ENCODE measurements at regions of chr14 and their contacts with region 1.

Region 1: GRCh38 chr14:34227834-34228649 is 234.0 kb downstream of the SPTSSA start:
- DNase-seq: peak; percentile 54 to 73 (median 63)
- ATAC-seq: peak; percentile 99
- H3K4me3 ChIP-seq: no peak overlapping the region
- H3K27ac ChIP-seq: no peak overlapping the region
- H3K4me1 ChIP-seq: no peaks in the 10 kb centered on the region; a peak in 1 of 5 replicates
- H3K27me3 ChIP-seq: no peaks in the 10 kb centered on the region; a peak in 1 of 5 replicates
- CTCF ChIP-seq: peak; percentile 70 to 76 (median 72)
- EP300 ChIP-seq: no peak
- POLR2A ChIP-seq: no peak
- RAD21 ChIP-seq: peak; percentile 77 to 84

Region 2: DNA sequence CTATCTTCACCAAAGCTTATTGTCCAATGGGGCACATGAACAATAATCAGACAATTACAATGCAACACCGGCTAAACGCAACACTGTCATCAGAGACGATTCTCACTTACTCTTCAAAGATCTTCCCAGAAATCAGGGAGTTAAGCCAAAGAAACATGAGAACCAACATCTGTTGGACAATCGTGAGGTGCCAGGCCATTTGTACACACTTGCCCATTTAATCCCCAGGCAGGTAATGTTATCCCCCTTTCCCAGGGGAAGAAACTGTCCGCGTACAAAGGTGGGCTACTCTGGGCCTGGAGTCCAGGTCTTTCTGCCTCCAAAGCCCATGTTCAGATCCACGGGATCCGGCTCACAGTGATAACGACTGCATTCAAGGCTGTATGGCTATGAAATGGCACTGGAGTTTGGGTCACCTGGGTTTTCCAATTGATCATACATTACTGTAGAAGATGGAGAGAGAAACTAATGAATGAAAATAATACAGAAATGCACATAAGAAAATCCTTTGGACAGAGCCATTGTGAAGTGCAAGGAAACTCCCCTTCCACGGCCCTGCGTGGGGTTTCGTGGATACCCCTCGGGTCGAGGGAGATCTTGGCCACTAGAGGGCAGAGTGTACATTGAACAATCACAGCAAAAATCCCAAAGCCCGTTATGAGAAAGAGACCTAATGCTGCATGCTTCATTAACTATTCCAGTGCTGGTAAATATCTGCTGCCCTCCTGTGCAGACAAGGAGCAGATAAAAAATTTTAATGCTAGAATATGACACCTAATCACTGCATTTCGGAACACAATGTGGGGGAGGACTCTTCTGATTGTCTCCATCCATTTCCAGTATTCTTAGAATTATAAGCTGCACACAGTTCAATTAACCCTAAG is 388.6 kb before region 1 on chr14:
- CTCF ChIA-PET with region 1: no interaction called
- POLR2A ChIA-PET with region 1: no interaction called
- in situ Hi-C with region 1: loop called (anchors 10 kb)
- intact Hi-C with region 1: loop called (anchors 5 kb)
- DNase-seq: peak; percentile 43 to 67 (median 52)
- ATAC-seq: peak; percentile 79
- H3K4me3 ChIP-seq: no peak overlapping the region
- H3K27ac ChIP-seq: no peak overlapping the region
- H3K4me1 ChIP-seq: peaks cover 5 to 25% of the 10 kb centered on the region in 2 experiments; a peak in 4 of 5 replicates
- H3K27me3 ChIP-seq: no peaks in the 10 kb centered on the region
- CTCF ChIP-seq: peak; percentile 63 to 80 (median 66)
- EP300 ChIP-seq: no peak
- POLR2A ChIP-seq: no peak
- RAD21 ChIP-seq: peak; percentile 66 to 77

Region 3: GRCh38 chr14:33959692-33960151 is 268.3 kb before region 1 on chr14:
- CTCF ChIA-PET with region 1: no interaction called
- POLR2A ChIA-PET with region 1: no interaction called
- in situ Hi-C with region 1: loop called (anchors 10 kb)
- intact Hi-C with region 1: no loop called
- DNase-seq: no peak
- ATAC-seq: no peak
- H3K4me3 ChIP-seq: no peak overlapping the region
- H3K27ac ChIP-seq: no peak overlapping the region
- H3K4me1 ChIP-seq: peaks cover 2 to 18% of the 10 kb centered on the region in 2 experiments; a peak in 4 of 5 replicates
- H3K27me3 ChIP-seq: no peaks in the 10 kb centered on the region
- CTCF ChIP-seq: no peak
- EP300 ChIP-seq: no peak
- POLR2A ChIP-seq: no peak
- RAD21 ChIP-seq: no peak

Region 4: GRCh38 chr14:34113005-34113511 is 115.0 kb before region 1 on chr14:
- CTCF ChIA-PET with region 1: no interaction called
- POLR2A ChIA-PET with region 1: no interaction called
- in situ Hi-C with region 1: no loop called
- intact Hi-C with region 1: loop called (anchors 5 kb)
- DNase-seq: peak in 1 of 4 experiments; percentile 9
- ATAC-seq: no peak
- H3K4me3 ChIP-seq: no peak overlapping the region
- H3K27ac ChIP-seq: no peak overlapping the region
- H3K4me1 ChIP-seq: no peaks in the 10 kb centered on the region; a peak in 2 of 5 replicates
- H3K27me3 ChIP-seq: 0 out of 5 replicates have a peak, but pooled peaks cover 0 to 2% of the 10 kb centered on the region in 2 experiments
- CTCF ChIP-seq: no peak
- EP300 ChIP-seq: no peak
- POLR2A ChIP-seq: no peak
- RAD21 ChIP-seq: no peak

Region 5: DNA sequence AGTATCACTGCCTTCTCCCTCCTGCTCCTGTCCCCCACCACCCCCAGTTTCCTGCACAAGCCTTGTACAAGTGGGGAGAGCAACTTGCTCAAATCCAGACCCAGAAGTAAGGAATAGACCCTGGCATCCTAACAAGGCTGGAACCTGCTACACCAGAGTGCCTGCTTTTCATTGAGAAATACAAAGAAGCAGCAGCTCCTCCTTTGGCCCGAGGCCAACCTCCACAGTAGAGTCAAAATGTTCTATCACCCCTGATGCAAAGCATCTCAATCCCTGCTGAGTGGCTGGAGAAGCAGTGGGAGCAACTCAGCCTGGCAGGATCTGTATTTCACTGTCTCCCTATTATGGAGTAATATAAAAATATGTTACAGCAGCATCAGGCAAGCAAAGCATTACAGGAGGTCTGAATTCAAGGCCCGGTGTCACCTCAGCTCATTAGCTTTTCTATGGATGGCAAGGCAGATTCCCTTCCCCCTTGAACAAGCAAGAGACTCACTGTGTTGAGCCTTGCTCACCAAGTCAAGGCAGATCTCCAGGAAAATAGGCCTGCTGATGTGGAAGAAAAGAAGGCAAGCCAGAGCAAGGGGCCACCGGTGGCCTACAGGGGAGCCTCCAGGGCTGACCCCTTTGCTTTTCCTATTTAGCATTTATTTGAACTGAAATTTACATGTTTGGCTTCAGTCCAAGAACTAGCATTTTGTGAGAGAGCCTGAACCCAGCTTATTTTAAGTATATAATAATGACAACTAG is 90.9 kb before region 1 on chr14:
- CTCF ChIA-PET with region 1: no interaction called
- POLR2A ChIA-PET with region 1: no interaction called
- in situ Hi-C with region 1: no loop called
- intact Hi-C with region 1: loop called (anchors 5 kb)
- DNase-seq: no peak
- ATAC-seq: no peak
- H3K4me3 ChIP-seq: no peak overlapping the region
- H3K27ac ChIP-seq: no peak overlapping the region
- H3K4me1 ChIP-seq: peaks cover 0 to 5% of the 10 kb centered on the region in 2 experiments; a peak in 2 of 5 replicates
- H3K27me3 ChIP-seq: peaks cover 0 to 6% of the 10 kb centered on the region in 2 experiments; a peak in 2 of 5 replicates
- CTCF ChIP-seq: no peak
- EP300 ChIP-seq: no peak
- POLR2A ChIP-seq: no peak
- RAD21 ChIP-seq: no peak

Region 6: GRCh38 chr14:34275078-34275477 is 47.0 kb after region 1 on chr14:
- CTCF ChIA-PET with region 1: no interaction called
- POLR2A ChIA-PET with region 1: no interaction called
- in situ Hi-C with region 1: no loop called
- intact Hi-C with region 1: no loop called
- DNase-seq: no peak
- ATAC-seq: no peak
- H3K4me3 ChIP-seq: no peak overlapping the region
- H3K27ac ChIP-seq: no peak overlapping the region
- H3K4me1 ChIP-seq: no peaks in the 10 kb centered on the region
- H3K27me3 ChIP-seq: no peaks in the 10 kb centered on the region
- CTCF ChIP-seq: no peak
- EP300 ChIP-seq: no peak
- POLR2A ChIP-seq: no peak
- RAD21 ChIP-seq: no peak